ENCODE measurements at regions of chr9 and their contacts with region 1.

Region 1: GRCh38 chr9:75487856-75488718 is 399.8 kb downstream of the OSTF1 start:
- DNase-seq: peak; percentile 21 to 80
- H3K4me3 ChIP-seq: no peak overlapping the region
- CTCF ChIP-seq: no peak
- POLR2A ChIP-seq: no peak

Region 2: GRCh38 chr9:74556685-74557084 is 931.4 kb before region 1 on chr9:
- intact Hi-C with region 1: loop called (anchors 5 kb)
- DNase-seq: no peak
- H3K4me3 ChIP-seq: no peak overlapping the region
- CTCF ChIP-seq: no peak
- POLR2A ChIP-seq: no peak

Measured in lower leg skin (tissue), 4 donors.